AG04449 (cell line): ENCODE measurements at regions of chr1 and their contacts with region 1.

Region 1: GRCh38 chr1:1890506-1891348 is at the start of gene GNB1:
- DNase-seq: no peak
- H3K4me3 ChIP-seq: peak within 1 kb of the TSS; percentile 83
- CTCF ChIP-seq: no peak

Region 2: GRCh38 chr1:1876335-1876930 is 14.3 kb before region 1 on chr1:
- CTCF ChIA-PET with region 1: interaction called, 10 read pairs
- POLR2A ChIA-PET with region 1: interaction called, 4 read pairs
- DNase-seq: no peak
- H3K4me3 ChIP-seq: no peak overlapping the region
- CTCF ChIP-seq: no peak

Region 3: GRCh38 chr1:1915741-1916528 is 25.2 kb after region 1 on chr1:
- CTCF ChIA-PET with region 1: no interaction called
- POLR2A ChIA-PET with region 1: no interaction called
- DNase-seq: no peak
- H3K4me3 ChIP-seq: no peak overlapping the region
- CTCF ChIP-seq: no peak